Activated CD4-positive, alpha-beta memory T cell treated with anti-CD3 and anti-CD28 coated beads for 36 hours (primary cell): ENCODE measurements at regions of chr10 and their contacts with region 1.

Region 1: DNA sequence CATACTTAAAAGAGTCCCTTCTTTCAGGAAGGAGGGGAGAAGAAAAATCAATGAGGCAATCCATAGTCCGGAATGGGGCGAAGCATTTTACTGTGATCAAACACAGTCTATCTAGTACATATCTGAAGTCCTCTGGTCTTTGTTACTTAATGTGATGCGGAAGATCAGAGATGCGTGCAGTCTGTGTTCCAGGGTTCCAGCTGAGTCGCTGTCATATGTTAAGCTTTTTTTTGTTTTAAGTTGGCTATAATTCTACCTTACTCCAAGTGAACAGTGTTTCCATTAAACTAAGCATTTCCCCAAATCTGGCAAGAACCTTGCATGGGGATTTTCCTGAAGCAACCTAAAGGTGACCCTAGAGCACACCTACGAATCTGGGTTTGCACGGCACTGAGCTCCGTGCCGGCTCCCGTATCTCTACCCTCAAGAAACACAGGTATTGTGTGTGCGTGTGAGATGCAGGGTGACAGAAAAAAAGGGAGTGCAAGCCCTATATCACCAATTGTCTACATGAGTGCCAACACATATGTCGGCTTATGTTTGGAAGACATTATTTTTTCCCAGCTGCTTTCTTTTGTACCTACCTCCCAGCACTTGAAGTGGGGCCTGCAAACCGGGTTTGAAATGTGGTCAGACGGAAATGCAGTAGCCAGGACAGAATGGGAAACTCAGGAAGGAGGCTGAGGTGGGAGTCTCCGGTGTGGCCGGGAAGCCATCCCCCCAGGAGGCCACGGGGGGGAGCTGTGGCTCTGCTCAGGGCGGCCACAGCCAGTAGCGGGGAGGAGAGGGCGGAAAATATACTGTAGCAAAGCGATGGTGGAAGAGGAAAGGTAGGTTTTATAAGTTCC is 435.8 kb upstream of the MGMT start:
- DNase-seq: peak; percentile 61
- H3K4me3 Mint-ChIP-seq: no peak overlapping the region
- H3K27ac Mint-ChIP-seq: no peak overlapping the region
- H3K4me1 Mint-ChIP-seq: peaks cover 15% of the 10 kb centered on the region
- H3K27me3 Mint-ChIP-seq: no peaks in the 10 kb centered on the region

Region 2: DNA sequence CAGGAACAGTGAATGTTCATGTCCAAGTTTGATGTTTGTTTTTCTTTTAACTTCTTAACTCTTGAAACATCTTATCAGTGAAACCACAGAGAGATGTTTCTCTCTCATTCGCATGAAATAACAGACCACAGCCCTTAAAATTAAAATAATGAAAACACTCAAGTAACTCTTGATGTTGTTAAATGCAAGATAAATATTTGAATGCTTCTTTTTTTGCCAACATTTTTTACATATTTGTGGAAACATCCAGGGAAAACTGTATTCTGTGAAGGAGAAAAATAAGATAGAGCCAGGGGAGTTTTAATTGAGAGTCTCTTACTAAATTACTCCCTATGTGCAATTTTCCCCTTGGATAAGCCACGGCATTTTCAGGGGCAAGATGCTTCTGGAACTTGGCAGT is 74.0 kb after region 1 on chr10:
- CTCF ChIA-PET with region 1: no interaction called
- POLR2A ChIA-PET with region 1: no interaction called
- intact Hi-C with region 1: loop called (anchors 2 kb)
- DNase-seq: no peak
- H3K4me3 Mint-ChIP-seq: no peak overlapping the region
- H3K27ac Mint-ChIP-seq: no peak overlapping the region
- H3K4me1 Mint-ChIP-seq: peaks cover 34% of the 10 kb centered on the region
- H3K27me3 Mint-ChIP-seq: no peaks in the 10 kb centered on the region

Region 3: DNA sequence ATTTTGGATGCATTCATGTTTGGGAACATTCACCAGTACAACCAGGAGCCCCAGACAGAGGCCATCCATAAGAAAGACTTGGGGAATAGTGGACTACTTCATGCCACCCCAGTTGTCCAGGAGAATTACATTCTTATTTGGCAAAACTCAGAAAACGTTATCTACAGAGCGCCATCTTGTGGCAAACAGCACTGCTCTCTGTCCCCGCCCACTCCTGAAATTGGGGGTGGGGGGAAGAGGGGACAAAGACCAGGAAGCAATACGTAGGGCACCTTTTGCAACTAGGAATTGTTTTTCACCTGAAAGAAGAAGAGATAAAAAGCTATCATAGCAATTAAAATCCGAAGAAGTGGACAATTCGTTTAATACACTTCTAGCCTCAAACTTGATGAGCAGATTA is 301.3 kb after region 1 on chr10:
- CTCF ChIA-PET with region 1: interaction called, 21 read pairs
- POLR2A ChIA-PET with region 1: no interaction called
- intact Hi-C with region 1: no loop called
- DNase-seq: peak; percentile 22
- H3K4me3 Mint-ChIP-seq: no peak overlapping the region
- H3K27ac Mint-ChIP-seq: no peak overlapping the region
- H3K4me1 Mint-ChIP-seq: no peaks in the 10 kb centered on the region
- H3K27me3 Mint-ChIP-seq: peaks cover 4% of the 10 kb centered on the region

Region 4: DNA sequence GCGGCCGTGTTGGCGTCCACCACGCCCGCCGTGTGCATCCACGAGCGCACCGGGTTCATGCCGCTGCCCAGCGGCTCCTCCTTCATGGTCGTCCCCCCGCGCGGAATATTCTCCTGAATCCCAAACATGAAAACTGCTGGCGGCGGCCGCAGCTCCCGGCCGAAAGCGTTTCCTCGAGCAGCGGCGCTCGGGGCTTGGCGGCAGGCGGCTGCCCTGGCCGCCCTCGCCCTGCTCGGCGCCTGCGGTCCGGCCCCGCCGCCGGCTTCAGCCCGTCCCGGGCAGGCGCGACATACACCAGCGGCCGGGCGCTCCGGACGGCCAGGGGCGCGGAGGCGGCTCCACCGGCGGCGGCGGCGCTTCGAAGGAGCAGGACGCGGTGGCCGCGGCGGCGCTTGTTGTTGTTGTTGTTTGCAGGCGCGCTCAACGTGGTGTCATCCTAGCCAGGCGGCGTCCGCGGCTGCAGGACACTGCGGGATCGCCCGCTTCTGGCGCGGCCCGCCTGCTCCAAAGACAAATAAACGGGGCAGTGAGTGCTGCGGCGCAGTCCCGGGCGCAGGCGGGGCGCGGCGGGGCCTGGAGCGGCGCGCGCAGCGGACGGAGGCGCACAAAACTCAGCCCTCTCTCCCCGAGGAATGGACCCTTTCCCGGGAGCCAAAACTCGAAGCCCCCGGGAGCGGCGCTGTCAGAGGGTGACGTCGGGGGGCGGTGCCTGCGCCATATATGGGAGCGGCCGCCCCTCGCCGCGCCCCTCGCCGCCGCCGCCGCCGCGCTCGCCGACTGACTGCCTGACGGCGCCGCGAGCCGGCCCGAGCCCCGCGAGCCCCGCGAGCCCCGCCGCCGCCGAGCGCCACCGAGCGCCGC is 932.7 kb after region 1 on chr10 and contains the start of gene EBF3:
- CTCF ChIA-PET with region 1: interaction called, 5 read pairs
- POLR2A ChIA-PET with region 1: no interaction called
- intact Hi-C with region 1: loop called (anchors 5 kb)
- DNase-seq: peak; percentile 47
- H3K4me3 Mint-ChIP-seq: peak within 1 kb of the TSS; percentile 63
- H3K27ac Mint-ChIP-seq: no peak within 1 kb of the TSS
- H3K4me1 Mint-ChIP-seq: peaks cover 15% of the 10 kb centered on the region
- H3K27me3 Mint-ChIP-seq: peaks cover 62% of the 10 kb centered on the region
- total RNA-seq, gene EBF3: not detected

Region 5: DNA sequence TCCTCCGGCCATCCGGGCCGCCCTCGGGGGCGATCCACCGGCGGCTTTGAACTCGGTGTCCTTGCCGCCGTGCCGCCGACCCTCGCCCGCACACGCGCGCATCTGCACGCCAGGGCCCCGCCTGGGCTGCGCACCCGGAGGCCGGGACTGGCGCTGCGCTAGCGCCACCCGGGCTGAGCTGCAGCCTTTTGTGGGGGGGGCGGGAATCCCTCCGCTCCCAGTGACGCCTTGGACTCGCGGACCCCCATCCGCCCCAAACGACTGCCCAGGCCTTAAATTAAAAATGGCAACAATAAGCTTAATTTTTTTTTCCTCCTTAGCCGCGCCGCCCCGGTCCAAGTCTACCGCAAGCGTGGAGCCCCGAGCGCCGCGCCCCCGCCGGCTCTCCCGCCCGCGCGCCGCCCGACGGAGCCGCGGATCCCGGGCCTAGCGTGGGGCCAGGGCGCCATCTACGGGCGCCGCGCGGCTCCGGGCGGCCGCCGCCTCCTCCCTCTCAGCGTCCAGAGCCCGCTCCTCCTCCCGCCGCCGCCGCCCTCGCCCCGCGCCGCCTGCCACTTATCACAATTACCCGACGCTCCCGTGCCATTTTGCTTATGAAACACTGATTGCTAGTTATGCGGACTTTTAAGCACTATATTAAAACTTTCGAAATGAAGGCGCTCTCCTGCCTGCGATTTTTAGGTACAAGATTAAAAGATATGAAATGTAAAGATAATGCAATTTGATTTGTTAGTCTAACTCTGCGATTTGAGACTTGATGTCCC is 940.3 kb after region 1 on chr10:
- CTCF ChIA-PET with region 1: interaction called, 8 read pairs
- POLR2A ChIA-PET with region 1: no interaction called
- intact Hi-C with region 1: loop called (anchors 5 kb)
- DNase-seq: peak; percentile 68
- H3K4me3 Mint-ChIP-seq: peak overlapping the region; percentile 4
- H3K27ac Mint-ChIP-seq: peak overlapping the region; percentile 43
- H3K4me1 Mint-ChIP-seq: peaks cover 16% of the 10 kb centered on the region
- H3K27me3 Mint-ChIP-seq: peaks cover 69% of the 10 kb centered on the region

Region 6: DNA sequence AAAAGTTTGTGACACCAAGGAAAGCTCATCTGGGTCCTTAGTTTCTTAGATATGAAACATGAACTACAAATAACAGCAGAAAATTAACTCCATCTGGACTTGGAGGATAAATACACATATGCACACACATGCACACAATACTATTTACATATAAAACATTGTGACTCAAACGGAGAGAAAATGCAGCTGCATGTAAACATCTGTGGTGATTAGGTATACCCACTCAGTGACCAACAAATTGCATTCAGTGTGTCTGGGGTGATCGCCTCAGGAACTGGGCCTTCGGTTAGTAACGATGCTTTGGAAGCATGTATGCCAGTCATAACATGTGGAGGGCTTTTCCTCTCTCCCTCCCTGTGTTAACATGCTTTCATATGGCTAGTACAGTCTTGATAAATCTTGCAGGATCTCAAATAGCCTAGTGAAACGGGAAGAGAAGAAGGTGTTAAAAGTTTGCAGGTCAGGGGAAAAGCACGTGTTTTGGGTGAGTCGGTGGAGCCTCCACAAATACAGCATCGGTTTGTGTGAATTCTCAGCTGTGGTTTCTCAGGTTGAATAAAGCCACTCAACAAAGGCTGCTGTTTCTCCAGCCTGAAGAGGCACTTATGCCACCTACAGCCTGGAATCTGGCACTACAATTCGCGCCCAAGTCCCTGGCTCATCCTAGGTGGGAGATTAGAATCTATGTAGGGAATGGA is 1096.3 kb after region 1 on chr10:
- CTCF ChIA-PET with region 1: interaction called, 5 read pairs
- POLR2A ChIA-PET with region 1: interaction called, 3 read pairs
- intact Hi-C with region 1: loop called (anchors 5 kb)
- DNase-seq: peak; percentile 73
- H3K4me3 Mint-ChIP-seq: no peak overlapping the region
- H3K27ac Mint-ChIP-seq: no peak overlapping the region
- H3K4me1 Mint-ChIP-seq: peaks cover 5% of the 10 kb centered on the region
- H3K27me3 Mint-ChIP-seq: peaks cover 19% of the 10 kb centered on the region